ENCODE measurements at regions of chr3 and their contacts with region 1.

Region 1: DNA sequence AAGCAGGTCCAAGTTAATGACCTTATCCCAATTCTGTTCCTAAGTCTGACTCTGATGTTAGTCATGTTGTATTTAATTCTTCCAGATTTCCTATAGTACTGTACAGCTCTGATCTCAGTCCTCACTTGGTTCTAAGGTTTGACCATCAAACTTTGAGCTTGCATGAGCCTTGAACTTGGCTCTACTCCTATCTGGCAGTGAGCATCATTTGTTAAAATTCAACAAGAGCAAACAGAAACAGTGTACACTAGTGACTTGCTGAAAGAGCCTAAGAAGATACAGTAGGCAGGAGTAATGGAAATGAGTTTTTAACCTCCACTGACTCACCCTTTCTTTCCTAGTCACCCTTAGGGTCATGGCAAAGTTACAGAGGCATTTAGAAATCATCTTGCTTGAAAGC is 451.1 kb upstream of the TPRG1 start:
- DNase-seq: no peak
- H3K4me3 Mint-ChIP-seq: no peak overlapping the region
- H3K27ac Mint-ChIP-seq: no peak overlapping the region
- H3K4me1 Mint-ChIP-seq: peaks cover 39% of the 10 kb centered on the region
- H3K27me3 Mint-ChIP-seq: peaks cover 12% of the 10 kb centered on the region

Region 2: DNA sequence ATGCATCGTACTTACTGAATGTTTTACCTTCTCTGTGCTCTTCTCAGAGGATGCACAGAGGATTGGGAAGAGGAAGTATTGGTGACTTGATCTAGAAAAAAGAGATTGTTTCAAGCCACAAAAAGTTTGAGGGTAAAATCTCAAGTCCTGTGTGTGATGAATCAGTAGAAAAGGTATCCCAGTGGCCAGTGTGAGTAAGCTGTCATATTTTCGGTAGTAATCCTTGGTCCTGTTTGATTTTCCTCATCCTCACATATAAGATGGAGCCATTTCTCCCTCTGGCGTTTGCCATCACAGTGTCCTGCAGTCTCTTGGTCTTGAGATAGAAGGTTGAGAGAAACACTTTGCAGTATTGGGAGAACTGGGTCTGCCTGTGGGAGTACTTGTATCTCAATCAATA is 399.9 kb before region 1 on chr3:
- CTCF ChIA-PET with region 1: interaction called, 4 read pairs
- POLR2A ChIA-PET with region 1: no interaction called
- intact Hi-C with region 1: loop called (anchors 5 kb)
- DNase-seq: no peak
- H3K4me3 Mint-ChIP-seq: no peak overlapping the region
- H3K27ac Mint-ChIP-seq: no peak overlapping the region
- H3K4me1 Mint-ChIP-seq: peaks cover 58% of the 10 kb centered on the region
- H3K27me3 Mint-ChIP-seq: peaks cover 2% of the 10 kb centered on the region

Region 3: DNA sequence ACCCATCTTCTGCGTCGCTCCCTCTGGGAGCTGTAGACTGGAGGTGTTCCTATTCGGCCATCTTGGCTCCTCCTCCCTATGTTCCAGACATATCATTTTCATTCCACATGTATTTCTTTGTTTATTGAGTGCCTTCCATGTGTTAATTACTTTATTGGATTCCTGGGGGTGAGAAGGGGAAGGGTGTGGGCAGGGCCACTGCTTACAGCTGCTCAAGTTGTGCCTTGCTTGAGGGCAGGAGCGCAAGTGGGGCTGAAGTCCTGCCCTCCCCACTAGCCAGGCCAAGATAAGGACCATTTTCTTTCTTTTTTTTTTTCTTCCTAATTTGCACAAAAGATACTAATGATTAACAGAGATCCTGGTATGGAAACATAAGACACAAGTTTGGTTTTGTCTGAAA is 341.9 kb before region 1 on chr3:
- CTCF ChIA-PET with region 1: no interaction called
- POLR2A ChIA-PET with region 1: no interaction called
- intact Hi-C with region 1: no loop called
- DNase-seq: no peak
- H3K4me3 Mint-ChIP-seq: no peak overlapping the region
- H3K27ac Mint-ChIP-seq: no peak overlapping the region
- H3K4me1 Mint-ChIP-seq: no peaks in the 10 kb centered on the region
- H3K27me3 Mint-ChIP-seq: no peaks in the 10 kb centered on the region

Region 4: DNA sequence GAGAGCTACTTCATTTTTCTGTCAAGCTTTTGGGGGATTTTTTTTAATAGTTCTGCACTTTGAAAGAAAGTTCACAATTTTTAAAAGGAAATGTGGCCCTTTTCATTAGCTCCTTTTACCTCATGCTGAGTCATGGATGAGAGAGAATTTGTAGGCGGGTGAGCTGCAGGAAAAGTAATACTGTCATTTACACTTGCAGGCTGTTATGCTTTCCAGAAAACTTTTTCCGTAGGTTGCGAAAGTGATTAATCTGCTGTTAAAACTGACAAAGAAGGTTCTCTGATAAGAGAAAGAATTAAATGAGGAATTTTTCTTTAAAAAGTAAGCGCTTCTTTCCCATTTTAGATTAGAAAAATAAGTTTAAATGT is 136.5 kb before region 1 on chr3:
- CTCF ChIA-PET with region 1: no interaction called
- POLR2A ChIA-PET with region 1: no interaction called
- intact Hi-C with region 1: loop called (anchors 10 kb)
- DNase-seq: peak; percentile 31
- H3K4me3 Mint-ChIP-seq: no peak overlapping the region
- H3K27ac Mint-ChIP-seq: no peak overlapping the region
- H3K4me1 Mint-ChIP-seq: peaks cover 13% of the 10 kb centered on the region
- H3K27me3 Mint-ChIP-seq: no peaks in the 10 kb centered on the region

Region 5: DNA sequence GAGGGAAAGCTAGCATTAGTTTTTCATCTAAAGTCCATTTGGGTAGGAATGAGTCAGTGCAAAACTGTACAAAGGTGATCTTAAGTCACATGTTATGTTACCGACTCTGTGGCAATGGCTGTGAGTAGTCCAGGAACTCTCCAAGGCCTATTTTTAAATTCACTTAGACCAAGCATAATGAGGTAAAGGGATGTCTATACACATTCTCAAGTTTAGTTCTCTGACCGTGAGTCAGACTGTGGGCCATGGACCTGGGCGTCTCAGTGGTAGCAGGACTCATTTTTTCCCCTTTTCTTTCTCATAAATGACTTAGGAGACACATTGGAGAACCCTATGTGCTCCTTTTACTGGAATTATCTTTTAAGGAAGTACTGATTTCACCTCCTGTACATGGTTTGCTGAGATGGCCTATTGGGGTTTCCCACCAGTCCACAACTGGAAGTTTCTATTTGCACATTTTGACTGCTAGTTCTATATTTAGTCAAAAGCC is 37.6 kb before region 1 on chr3:
- CTCF ChIA-PET with region 1: no interaction called
- POLR2A ChIA-PET with region 1: no interaction called
- intact Hi-C with region 1: loop called (anchors 1 kb)
- DNase-seq: peak; percentile 74
- H3K4me3 Mint-ChIP-seq: no peak overlapping the region
- H3K27ac Mint-ChIP-seq: peak overlapping the region; percentile 40
- H3K4me1 Mint-ChIP-seq: peaks cover 41% of the 10 kb centered on the region
- H3K27me3 Mint-ChIP-seq: no peaks in the 10 kb centered on the region

Region 6: GRCh38 chr3:188697127-188697526 is 23.5 kb before region 1 on chr3:
- CTCF ChIA-PET with region 1: interaction called, 3 read pairs
- POLR2A ChIA-PET with region 1: interaction called, 3 read pairs
- intact Hi-C with region 1: loop called (anchors 1 kb)
- DNase-seq: peak; percentile 55
- H3K4me3 Mint-ChIP-seq: no peak overlapping the region
- H3K27ac Mint-ChIP-seq: peak overlapping the region; percentile 7
- H3K4me1 Mint-ChIP-seq: peaks cover 50% of the 10 kb centered on the region
- H3K27me3 Mint-ChIP-seq: peaks cover 7% of the 10 kb centered on the region

Region 7: DNA sequence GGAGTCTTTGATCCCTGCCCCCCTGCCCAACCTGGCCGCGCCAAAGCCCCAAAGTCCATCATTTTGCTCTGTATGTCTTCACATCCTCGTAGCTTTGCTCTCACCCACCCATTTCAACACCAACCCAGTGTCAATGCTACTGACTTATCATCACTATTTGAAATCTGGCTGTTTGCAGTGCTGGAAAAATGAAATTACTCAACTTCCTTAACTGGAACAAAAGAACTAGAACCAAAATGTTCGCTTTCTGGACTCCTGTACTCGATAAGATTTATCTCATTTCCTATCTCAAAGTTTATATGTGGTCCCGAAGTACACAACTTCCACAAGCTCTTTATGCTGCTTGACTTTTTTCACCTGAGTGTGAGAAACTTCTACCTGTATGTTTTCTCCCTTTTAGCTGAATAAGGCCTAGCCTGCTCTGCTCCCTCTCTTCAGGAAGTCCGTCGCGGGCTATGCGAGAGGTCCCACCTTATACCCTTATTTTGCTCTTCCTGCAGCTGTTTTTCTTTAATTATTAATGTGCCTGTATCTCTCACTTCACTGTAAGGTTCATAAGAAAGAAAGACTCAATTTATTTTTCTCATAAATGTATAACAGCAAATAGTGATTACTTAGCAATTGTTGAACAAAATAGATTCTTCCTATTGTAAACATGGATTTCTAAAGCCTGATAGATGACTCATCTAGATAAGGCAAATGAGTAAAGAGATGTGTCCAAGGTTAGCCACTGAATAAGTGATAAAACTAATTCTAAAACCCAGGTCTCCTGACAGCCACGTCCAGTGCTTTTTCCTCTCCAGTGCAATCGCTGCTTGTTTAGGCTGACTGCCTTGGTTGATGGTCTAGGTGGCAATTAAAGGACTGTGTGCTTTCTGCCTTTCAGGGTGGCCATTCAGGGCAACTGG is 13.0 kb before region 1 on chr3:
- CTCF ChIA-PET with region 1: no interaction called
- POLR2A ChIA-PET with region 1: no interaction called
- intact Hi-C with region 1: no loop called
- DNase-seq: no peak
- H3K4me3 Mint-ChIP-seq: no peak overlapping the region
- H3K27ac Mint-ChIP-seq: no peak overlapping the region
- H3K4me1 Mint-ChIP-seq: peaks cover 13% of the 10 kb centered on the region
- H3K27me3 Mint-ChIP-seq: no peaks in the 10 kb centered on the region

Region 8: DNA sequence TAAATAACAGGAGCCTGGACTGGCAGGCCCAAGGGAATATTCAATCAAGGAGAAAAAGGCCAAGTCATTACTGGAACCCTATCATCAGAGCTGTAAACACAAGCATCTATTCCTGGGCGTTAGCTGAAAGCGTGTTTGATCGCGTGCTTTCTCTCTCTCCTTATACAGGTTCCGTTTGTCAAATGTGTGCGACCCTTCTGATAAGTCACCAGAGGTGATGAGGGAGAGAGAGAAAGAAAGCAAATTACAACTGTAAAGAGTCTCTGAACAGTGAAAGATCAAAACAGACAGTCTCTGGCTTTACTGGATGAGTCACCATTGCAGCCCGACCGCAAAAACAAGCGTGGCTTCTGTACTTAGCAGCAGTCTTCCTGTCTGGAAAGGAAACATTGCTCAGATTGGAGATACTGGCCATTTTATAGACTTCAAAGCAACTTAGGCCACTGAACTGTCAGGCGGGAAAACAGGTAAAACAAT is 411.6 kb after region 1 on chr3:
- CTCF ChIA-PET with region 1: no interaction called
- POLR2A ChIA-PET with region 1: no interaction called
- intact Hi-C with region 1: no loop called
- DNase-seq: peak; percentile 90
- H3K4me3 Mint-ChIP-seq: peak overlapping the region; percentile 50
- H3K27ac Mint-ChIP-seq: peak overlapping the region; percentile 83
- H3K4me1 Mint-ChIP-seq: peaks cover 26% of the 10 kb centered on the region
- H3K27me3 Mint-ChIP-seq: no peaks in the 10 kb centered on the region

Measured in activated CD4-positive, alpha-beta memory T cell treated with anti-CD3 and anti-CD28 coated beads for 36 hours (primary cell).